Activated B cell treated with CpG ODN at 0.5 μM for 24 hours (primary cell): ENCODE measurements at regions of chr9 and their contacts with region 1.

Region 1: GRCh38 chr9:131270171-131271015 is 5.9 kb downstream of the FAM78A start:
- DNase-seq: peak; percentile 40
- ATAC-seq: peak; percentile 13
- H3K4me3 Mint-ChIP-seq: peak overlapping the region; percentile 76
- H3K27ac Mint-ChIP-seq: peak overlapping the region; percentile 98
- H3K4me1 Mint-ChIP-seq: peaks cover 88% of the 10 kb centered on the region
- H3K27me3 Mint-ChIP-seq: no peaks in the 10 kb centered on the region
- CTCF ChIP-seq: no peak

Region 2: DNA sequence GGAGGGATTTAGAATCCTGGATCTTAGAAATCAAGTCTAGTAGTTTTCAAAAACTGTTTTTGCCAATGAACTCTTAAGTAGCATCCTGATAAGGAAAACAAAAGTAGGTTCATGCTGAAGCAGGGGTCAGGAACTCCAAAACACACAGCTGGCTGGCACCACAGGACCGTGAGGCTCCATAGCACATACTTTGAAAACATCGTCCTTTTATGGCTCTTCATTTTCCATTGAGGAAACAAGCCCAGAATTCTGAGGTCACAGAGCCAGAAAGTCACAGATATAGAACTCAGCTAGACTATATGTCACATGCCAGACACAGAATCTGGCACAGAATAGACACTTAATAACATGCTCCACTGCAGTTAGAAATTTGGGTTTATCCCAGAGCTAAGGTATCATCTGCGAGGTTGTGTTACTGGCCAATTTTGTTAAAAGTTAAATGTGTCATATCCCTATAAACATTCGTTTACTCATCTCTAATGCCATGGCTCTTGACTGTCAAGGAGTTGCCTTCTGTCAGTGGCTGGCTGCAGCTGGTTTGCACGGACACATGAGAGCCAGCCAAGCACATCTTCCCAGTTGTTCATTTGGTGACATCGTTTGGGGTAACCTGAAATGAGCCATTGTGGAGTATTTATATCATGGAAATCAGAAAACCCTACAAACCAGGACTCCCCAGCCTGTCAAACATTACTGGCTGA is 52.9 kb before region 1 on chr9:
- CTCF ChIA-PET with region 1: no interaction called
- POLR2A ChIA-PET with region 1: interaction called, 11 read pairs
- intact Hi-C with region 1: no loop called
- DNase-seq: no peak
- ATAC-seq: no peak
- H3K4me3 Mint-ChIP-seq: no peak overlapping the region
- H3K27ac Mint-ChIP-seq: no peak overlapping the region
- H3K4me1 Mint-ChIP-seq: no peaks in the 10 kb centered on the region
- H3K27me3 Mint-ChIP-seq: no peaks in the 10 kb centered on the region
- CTCF ChIP-seq: no peak

Region 3: DNA sequence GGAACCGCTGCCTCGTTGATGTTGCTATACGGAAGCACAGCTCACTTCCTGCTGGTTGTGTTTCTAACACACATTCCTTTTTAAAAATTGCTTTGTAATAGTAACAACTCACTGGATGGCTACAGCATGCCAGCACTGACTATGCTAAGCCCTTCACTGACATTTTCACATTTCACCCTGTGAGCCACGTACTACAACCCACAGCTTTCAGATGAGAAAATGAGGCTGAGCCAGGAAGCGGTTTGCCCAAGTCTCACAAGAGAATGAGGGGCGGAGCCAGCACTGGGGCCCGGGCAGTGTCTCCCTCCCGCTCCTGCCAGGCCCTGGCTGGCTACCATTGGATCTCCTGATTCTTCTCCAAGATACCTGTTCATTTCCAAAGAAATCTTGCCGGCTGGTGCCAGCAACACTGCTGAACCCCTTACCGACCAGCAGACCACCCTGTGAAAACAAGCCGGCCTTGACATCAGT is 32.4 kb before region 1 on chr9:
- CTCF ChIA-PET with region 1: no interaction called
- POLR2A ChIA-PET with region 1: interaction called, 34 read pairs
- intact Hi-C with region 1: loop called (anchors 1 kb)
- DNase-seq: peak; percentile 58
- ATAC-seq: peak; percentile 97
- H3K4me3 Mint-ChIP-seq: peak overlapping the region; percentile 87
- H3K27ac Mint-ChIP-seq: peak overlapping the region; percentile 96
- H3K4me1 Mint-ChIP-seq: peaks cover 17% of the 10 kb centered on the region
- H3K27me3 Mint-ChIP-seq: no peaks in the 10 kb centered on the region
- CTCF ChIP-seq: no peak

Region 4: DNA sequence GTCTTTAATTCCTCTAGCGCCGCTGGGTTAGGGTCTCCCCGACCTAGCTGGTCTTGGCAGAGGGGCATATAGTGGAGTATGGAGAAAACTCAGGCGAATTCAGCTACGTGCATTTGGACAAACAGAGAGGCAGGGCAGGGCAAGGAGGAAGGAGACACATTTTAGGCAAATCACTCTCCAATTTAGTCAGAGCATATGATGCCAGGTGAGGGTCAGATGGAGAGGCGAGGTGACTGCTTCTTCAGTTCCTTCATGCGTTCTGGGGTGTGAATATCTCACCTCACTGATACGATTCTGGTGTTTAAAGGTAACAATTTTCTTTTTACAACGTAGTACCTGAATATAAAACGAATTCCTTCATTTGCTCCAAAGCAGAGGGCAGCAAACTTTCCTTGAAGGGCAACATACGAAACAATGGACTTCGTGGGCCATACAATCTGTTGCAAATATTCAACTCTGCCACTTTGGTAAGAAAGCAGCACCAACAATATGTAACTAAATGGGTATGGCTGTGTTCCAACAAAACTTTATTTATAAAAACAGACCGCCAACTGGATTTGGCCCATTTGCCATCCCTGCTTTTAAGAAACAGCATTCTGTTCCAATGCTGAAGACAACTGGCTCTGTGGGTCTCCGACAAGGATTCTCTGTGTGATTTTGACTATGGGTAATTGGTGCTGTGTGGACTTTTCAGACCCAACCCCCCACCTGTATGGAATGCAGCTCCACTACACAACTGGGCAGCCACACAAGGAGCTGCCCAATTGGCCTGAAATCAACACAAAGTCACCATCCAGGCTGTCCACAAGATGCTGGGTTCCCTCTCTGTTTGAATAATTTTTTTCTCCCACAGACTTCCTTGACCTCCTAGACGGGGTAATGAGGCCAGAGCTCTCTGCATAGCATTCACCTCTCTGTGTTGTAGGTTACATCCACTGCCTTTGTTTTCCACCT is 415.6 kb after region 1 on chr9:
- CTCF ChIA-PET with region 1: no interaction called
- POLR2A ChIA-PET with region 1: no interaction called
- intact Hi-C with region 1: no loop called
- DNase-seq: no peak
- ATAC-seq: peak; percentile 91
- H3K4me3 Mint-ChIP-seq: peak overlapping the region; percentile 65
- H3K27ac Mint-ChIP-seq: peak overlapping the region; percentile 71
- H3K4me1 Mint-ChIP-seq: peaks cover 92% of the 10 kb centered on the region
- H3K27me3 Mint-ChIP-seq: no peaks in the 10 kb centered on the region
- CTCF ChIP-seq: no peak